ENCODE measurements at regions of chrX and their contacts with region 1.

Region 1: GRCh38 chrX:24426391-24426790 is 38.7 kb upstream of the PDK3 start:
- DNase-seq: no peak
- H3K4me3 ChIP-seq: no peak overlapping the region
- H3K27ac ChIP-seq: peak overlapping the region; percentile 53 to 85 (median 77)
- H3K4me1 ChIP-seq: peaks cover 0 to 43% (median 22%) of the 10 kb centered on the region in 4 donors
- H3K27me3 ChIP-seq: no peaks in the 10 kb centered on the region
- CTCF ChIP-seq: no peak
- EP300 ChIP-seq: no peak
- POLR2A ChIP-seq: no peak

Region 2: GRCh38 chrX:24466025-24466424 is 39.6 kb after region 1 on chrX:
- intact Hi-C with region 1: loop called (anchors 2 kb)
- DNase-seq: no peak
- H3K4me3 ChIP-seq: peak overlapping the region; percentile 54 to 75 (median 72)
- H3K27ac ChIP-seq: peak overlapping the region; percentile 79 to 89 (median 86)
- H3K4me1 ChIP-seq: peaks cover 0 to 22% (median 0%) of the 10 kb centered on the region in 4 donors
- H3K27me3 ChIP-seq: no peaks in the 10 kb centered on the region
- CTCF ChIP-seq: no peak
- EP300 ChIP-seq: no peak
- POLR2A ChIP-seq: no peak

Region 3: GRCh38 chrX:24542756-24543155 is 116.4 kb after region 1 on chrX:
- intact Hi-C with region 1: no loop called
- DNase-seq: no peak
- H3K4me3 ChIP-seq: no peak overlapping the region
- H3K27ac ChIP-seq: no peak overlapping the region
- H3K4me1 ChIP-seq: peaks cover 0 to 4% (median 0%) of the 10 kb centered on the region in 4 donors
- H3K27me3 ChIP-seq: no peaks in the 10 kb centered on the region
- CTCF ChIP-seq: no peak
- EP300 ChIP-seq: no peak
- POLR2A ChIP-seq: no peak

Measured in sigmoid colon (tissue), 7 donors.